Caco-2 (cell line): ENCODE measurements at regions of chr21 and their contacts with region 1.

Region 1: DNA sequence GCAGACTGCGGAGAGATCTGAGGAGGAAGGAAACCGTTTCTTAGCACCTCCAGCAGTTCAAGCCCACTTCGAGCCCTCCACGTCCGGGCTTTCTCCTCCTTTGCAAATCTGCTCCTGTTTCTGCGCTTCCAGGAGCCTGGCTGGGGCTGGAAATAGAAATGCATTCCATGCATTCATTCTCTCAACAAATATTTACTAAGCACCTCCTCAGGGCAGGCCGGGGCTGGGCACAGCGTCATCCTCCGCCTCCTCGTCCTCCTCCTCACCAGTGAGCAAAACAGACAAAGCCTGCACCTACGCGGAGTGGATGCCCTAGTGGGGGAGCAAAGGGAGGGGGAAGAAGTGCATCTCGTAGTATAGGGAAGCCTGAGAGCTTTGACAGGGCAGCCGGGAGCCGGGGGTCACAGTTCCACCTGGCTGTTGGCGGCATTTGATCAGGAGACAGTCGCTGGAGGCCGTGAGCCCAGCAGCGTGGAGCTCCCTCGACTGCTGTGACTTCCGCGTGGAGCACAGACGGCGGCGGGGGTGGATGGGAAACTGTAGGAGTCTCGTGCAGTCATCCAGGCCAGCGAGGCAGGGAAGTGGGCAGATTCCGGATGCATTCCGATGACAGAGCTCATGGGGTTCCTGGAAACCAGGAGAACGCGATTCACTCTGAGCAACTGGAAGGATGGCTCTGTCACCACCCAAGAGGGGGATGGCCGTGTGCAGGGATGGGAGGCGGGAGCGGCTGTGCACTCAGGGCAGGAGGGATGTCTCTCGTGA is 93.5 kb downstream of the SIK1 start:
- DNase-seq: peak; percentile 91 to 94
- H3K4me3 ChIP-seq: peak overlapping the region; percentile 36
- H3K4me3 Mint-ChIP-seq: peak overlapping the region; percentile 74
- H3K27ac Mint-ChIP-seq: peak overlapping the region; percentile 99
- H3K4me1 ChIP-seq: peaks cover 26% of the 10 kb centered on the region
- H3K4me1 Mint-ChIP-seq: peaks cover 29% of the 10 kb centered on the region
- H3K27me3 ChIP-seq: no peaks in the 10 kb centered on the region
- H3K27me3 Mint-ChIP-seq: no peaks in the 10 kb centered on the region
- CTCF ChIP-seq: no peak

Region 2: DNA sequence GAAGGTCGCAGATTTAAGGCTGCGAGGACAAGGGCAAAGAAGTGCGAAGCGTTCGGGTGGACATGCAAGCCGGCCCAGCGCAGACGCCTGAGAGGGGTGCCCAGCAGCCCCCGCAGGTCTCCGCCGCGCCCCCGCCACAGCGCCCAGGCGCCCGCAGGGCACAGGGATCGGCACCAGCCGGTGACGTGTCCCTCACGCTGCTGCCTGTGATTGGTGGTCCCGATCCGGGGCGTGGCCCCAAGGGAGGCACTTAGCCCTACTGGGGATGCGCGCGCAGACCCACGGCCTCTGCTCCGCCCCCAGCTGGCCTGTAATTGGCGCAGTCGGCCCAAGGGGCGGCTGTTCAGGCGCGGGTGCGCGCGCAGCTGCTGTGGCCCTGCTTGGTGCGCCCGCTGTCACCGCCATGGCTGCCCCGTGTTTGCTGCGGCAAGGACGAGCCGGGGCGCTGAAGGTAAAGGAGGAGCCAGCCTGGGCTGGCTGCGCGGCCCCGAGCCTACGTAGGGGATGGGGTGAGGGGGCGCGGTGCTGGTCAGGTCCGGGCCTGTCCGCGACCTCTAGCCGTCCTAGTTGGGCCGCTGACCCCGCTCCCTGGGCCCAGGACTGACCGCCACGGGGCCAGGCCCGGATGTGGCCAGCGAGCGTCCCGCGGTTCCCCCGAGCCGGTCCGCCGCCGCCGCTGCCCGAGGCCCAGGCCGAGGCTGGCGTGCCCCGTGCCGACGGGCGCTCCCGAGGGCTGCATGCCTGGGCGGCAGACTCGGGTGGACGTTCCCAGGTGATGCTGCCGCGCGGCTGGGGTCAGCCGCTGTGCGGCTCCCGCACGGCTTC is 440.3 kb before region 1 on chr21 and contains the start of gene NDUFV3:
- CTCF ChIA-PET with region 1: no interaction called
- POLR2A ChIA-PET with region 1: no interaction called
- intact Hi-C with region 1: no loop called
- DNase-seq: peak; percentile 98 to 99
- H3K4me3 ChIP-seq: peak within 1 kb of the TSS; percentile 92
- H3K4me3 Mint-ChIP-seq: peak within 1 kb of the TSS; percentile 90
- H3K27ac Mint-ChIP-seq: peak within 1 kb of the TSS; percentile 92
- H3K4me1 ChIP-seq: no peaks in the 10 kb centered on the region
- H3K4me1 Mint-ChIP-seq: no peaks in the 10 kb centered on the region
- H3K27me3 ChIP-seq: no peaks in the 10 kb centered on the region
- H3K27me3 Mint-ChIP-seq: no peaks in the 10 kb centered on the region
- CTCF ChIP-seq: no peak
- total RNA-seq, gene NDUFV3: 32.5 and 33.8 TPM in 2 replicates

Region 3: GRCh38 chr21:43287795-43288755 is 45.4 kb before region 1 on chr21:
- CTCF ChIA-PET with region 1: interaction called, 3 read pairs
- POLR2A ChIA-PET with region 1: no interaction called
- intact Hi-C with region 1: loop called (anchors 1 kb)
- DNase-seq: peak; percentile 68 to 84
- H3K4me3 ChIP-seq: peak overlapping the region; percentile 9; the same call in 1 of the 2 replicates
- H3K4me3 Mint-ChIP-seq: peak overlapping the region; percentile 68
- H3K27ac Mint-ChIP-seq: peak overlapping the region; percentile 65
- H3K4me1 ChIP-seq: peaks cover 27% of the 10 kb centered on the region
- H3K4me1 Mint-ChIP-seq: peaks cover 7% of the 10 kb centered on the region
- H3K27me3 ChIP-seq: no peaks in the 10 kb centered on the region
- H3K27me3 Mint-ChIP-seq: no peaks in the 10 kb centered on the region
- CTCF ChIP-seq: no peak

Region 4: DNA sequence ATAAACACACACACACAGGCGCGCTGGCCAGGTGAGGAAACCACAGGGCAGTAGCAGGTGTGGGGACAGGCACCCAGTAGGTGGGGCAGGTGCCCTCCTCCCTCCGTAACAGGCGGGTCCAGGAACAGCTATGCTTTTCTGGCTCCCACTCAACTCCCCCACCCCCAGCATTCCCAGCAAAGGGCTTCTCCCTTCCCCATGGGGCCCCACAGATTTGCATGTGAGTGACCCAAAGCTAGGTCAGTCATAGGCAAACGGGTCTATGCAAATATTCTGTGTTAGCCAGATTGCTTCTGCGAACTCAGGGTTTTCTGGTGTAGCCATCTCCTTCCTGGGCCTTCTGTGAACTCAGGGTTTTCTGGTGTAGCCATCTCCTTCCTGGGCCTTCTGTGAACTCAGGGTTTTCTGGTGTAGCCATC is 20.7 kb before region 1 on chr21:
- CTCF ChIA-PET with region 1: no interaction called
- POLR2A ChIA-PET with region 1: interaction called, 4 read pairs
- intact Hi-C with region 1: loop called (anchors 1 kb)
- DNase-seq: peak; percentile 72 to 84
- H3K4me3 ChIP-seq: no peak overlapping the region
- H3K4me3 Mint-ChIP-seq: no peak overlapping the region
- H3K27ac Mint-ChIP-seq: no peak overlapping the region
- H3K4me1 ChIP-seq: peaks cover 39% of the 10 kb centered on the region
- H3K4me1 Mint-ChIP-seq: peaks cover 18% of the 10 kb centered on the region
- H3K27me3 ChIP-seq: no peaks in the 10 kb centered on the region
- H3K27me3 Mint-ChIP-seq: no peaks in the 10 kb centered on the region
- CTCF ChIP-seq: no peak

Region 5: GRCh38 chr21:43318841-43319781 is 14.4 kb before region 1 on chr21:
- CTCF ChIA-PET with region 1: interaction called, 4 read pairs
- POLR2A ChIA-PET with region 1: interaction called, 11 read pairs
- intact Hi-C with region 1: no loop called
- DNase-seq: peak in 1 of 2 experiments; percentile 40
- H3K4me3 ChIP-seq: no peak overlapping the region
- H3K4me3 Mint-ChIP-seq: no peak overlapping the region
- H3K27ac Mint-ChIP-seq: no peak overlapping the region
- H3K4me1 ChIP-seq: peaks cover 32% of the 10 kb centered on the region
- H3K4me1 Mint-ChIP-seq: no peaks in the 10 kb centered on the region
- H3K27me3 ChIP-seq: no peaks in the 10 kb centered on the region
- H3K27me3 Mint-ChIP-seq: no peaks in the 10 kb centered on the region
- CTCF ChIP-seq: no peak